GM12878 (cell line): ENCODE measurements at regions of chr2 and their contacts with region 1.

Region 1: GRCh38 chr2:105802587-105802986 is 57.9 kb downstream of the NCK2 start:
- DNase-seq: peak; percentile 74
- ATAC-seq: peak; percentile 74
- H3K4me3 ChIP-seq: no peak overlapping the region
- H3K27ac ChIP-seq: peak overlapping the region; percentile 72
- H3K4me1 ChIP-seq: peaks cover 69% of the 10 kb centered on the region
- H3K27me3 ChIP-seq: no peaks in the 10 kb centered on the region
- CTCF ChIP-seq: no peak
- EP300 ChIP-seq: no peak
- POLR2A ChIP-seq: no peak
- RAD21 ChIP-seq: no peak

Region 2: DNA sequence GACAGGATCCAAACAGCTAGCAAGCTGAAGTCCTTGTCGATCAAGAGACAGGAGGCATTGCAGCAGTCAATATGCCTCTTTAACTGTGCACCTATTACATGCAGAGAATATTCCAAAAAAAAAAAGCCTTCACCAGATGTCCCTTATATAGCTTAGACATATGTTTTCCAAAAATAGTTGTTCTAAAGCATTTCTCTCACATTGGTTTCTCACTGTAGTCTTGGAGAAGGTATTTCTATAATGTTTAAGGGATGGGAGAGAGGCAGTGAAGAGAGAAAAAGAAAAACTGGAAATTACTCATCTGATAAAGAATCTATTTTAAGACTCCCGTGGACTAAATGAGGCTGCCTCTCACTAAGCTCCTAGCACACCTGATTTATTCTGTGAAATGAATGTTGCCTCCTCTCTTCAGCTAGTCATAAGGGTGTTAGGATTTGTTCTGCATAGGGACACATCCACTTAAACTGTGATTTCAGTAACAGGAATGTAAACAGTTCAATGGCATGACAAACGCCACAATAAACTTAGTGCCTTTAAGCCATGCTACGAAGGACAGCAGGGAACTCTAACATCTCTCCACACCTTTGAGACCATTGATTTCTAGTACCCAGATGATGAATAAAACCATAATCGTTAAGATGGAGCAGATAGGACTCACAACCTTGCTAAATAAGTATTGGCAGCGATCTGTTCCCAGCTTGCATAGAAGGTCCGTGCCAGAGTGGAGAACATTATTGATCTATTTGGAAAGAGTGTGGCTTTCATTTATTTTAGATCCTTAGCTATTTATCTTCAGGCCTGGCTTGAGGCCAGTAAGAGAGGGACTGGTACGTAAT is 156.4 kb before region 1 on chr2:
- CTCF ChIA-PET with region 1: no interaction called
- POLR2A ChIA-PET with region 1: no interaction called
- RAD21 ChIA-PET with region 1: no interaction called
- SMC1A ChIA-PET with region 1: no interaction called
- in situ Hi-C with region 1: no loop called
- intact Hi-C with region 1: no loop called
- DNase-seq: no peak
- ATAC-seq: no peak
- H3K4me3 ChIP-seq: no peak overlapping the region
- H3K27ac ChIP-seq: no peak overlapping the region
- H3K4me1 ChIP-seq: no peaks in the 10 kb centered on the region
- H3K27me3 ChIP-seq: no peaks in the 10 kb centered on the region
- CTCF ChIP-seq: no peak
- EP300 ChIP-seq: no peak
- POLR2A ChIP-seq: no peak
- RAD21 ChIP-seq: no peak

Region 3: GRCh38 chr2:105749583-105750400 is 52.8 kb before region 1 on chr2:
- CTCF ChIA-PET with region 1: interaction called, 29 read pairs
- POLR2A ChIA-PET with region 1: interaction called, 9 read pairs
- RAD21 ChIA-PET with region 1: interaction called, 40 read pairs
- SMC1A ChIA-PET with region 1: interaction called, 70 read pairs
- in situ Hi-C with region 1: no loop called
- intact Hi-C with region 1: loop called (anchors 2 kb)
- DNase-seq: no peak
- ATAC-seq: no peak
- H3K4me3 ChIP-seq: 0 out of 2 replicates have a peak overlapping the region, but pooled peaks have one; percentile 27
- H3K27ac ChIP-seq: peak overlapping the region; percentile 28
- H3K4me1 ChIP-seq: peaks cover 35% of the 10 kb centered on the region
- H3K27me3 ChIP-seq: no peaks in the 10 kb centered on the region
- CTCF ChIP-seq: no peak
- EP300 ChIP-seq: no peak
- POLR2A ChIP-seq: no peak
- RAD21 ChIP-seq: no peak

Region 4: GRCh38 chr2:105789745-105790460 is 12.7 kb before region 1 on chr2:
- CTCF ChIA-PET with region 1: interaction called, 24 read pairs
- POLR2A ChIA-PET with region 1: interaction called, 4 read pairs
- RAD21 ChIA-PET with region 1: interaction called, 9 read pairs
- SMC1A ChIA-PET with region 1: interaction called, 14 read pairs
- in situ Hi-C with region 1: no loop called
- intact Hi-C with region 1: no loop called
- DNase-seq: peak; percentile 74
- ATAC-seq: peak; percentile 93
- H3K4me3 ChIP-seq: peak overlapping the region; percentile 29; the same call in 1 of the 2 replicates
- H3K27ac ChIP-seq: peak overlapping the region; percentile 76
- H3K4me1 ChIP-seq: peaks cover 37% of the 10 kb centered on the region
- H3K27me3 ChIP-seq: no peaks in the 10 kb centered on the region
- CTCF ChIP-seq: peak; percentile 32 to 44 (median 37); a peak in 4 of 6 replicates
- EP300 ChIP-seq: no peak
- POLR2A ChIP-seq: no peak
- RAD21 ChIP-seq: peak; percentile 56

Region 5: DNA sequence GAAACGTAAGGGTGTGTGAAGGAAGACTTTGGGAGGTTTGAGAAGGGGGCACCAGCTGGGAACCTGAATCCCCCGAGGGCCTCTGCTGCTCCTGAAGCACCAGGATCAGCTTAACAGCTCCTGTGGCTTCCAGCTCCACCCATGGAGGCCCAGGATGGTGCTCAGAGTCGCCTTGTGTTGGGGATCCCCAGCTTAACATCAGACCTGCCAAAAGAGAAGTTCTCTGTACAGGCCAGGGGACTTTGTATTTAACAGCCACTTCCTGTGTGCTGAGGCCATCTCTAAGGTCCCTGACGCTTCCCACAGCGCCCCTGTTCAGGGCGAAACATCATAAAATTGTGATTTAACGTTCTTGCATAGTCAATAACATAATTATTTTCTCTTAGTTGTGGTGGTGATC is 19.6 kb after region 1 on chr2:
- CTCF ChIA-PET with region 1: interaction called, 16 read pairs
- POLR2A ChIA-PET with region 1: interaction called, 11 read pairs
- RAD21 ChIA-PET with region 1: interaction called, 26 read pairs
- SMC1A ChIA-PET with region 1: interaction called, 20 read pairs
- in situ Hi-C with region 1: no loop called
- intact Hi-C with region 1: no loop called
- DNase-seq: no peak
- ATAC-seq: peak; percentile 99
- H3K4me3 ChIP-seq: no peak overlapping the region; the same call in 1 of the 2 replicates
- H3K27ac ChIP-seq: peak overlapping the region; percentile 73
- H3K4me1 ChIP-seq: peaks cover 13% of the 10 kb centered on the region; the same call in 1 of the 2 replicates
- H3K27me3 ChIP-seq: no peaks in the 10 kb centered on the region
- CTCF ChIP-seq: no peak
- EP300 ChIP-seq: no peak
- POLR2A ChIP-seq: no peak
- RAD21 ChIP-seq: peak; percentile 14; the same call in 1 of the 2 replicates

Region 6: DNA sequence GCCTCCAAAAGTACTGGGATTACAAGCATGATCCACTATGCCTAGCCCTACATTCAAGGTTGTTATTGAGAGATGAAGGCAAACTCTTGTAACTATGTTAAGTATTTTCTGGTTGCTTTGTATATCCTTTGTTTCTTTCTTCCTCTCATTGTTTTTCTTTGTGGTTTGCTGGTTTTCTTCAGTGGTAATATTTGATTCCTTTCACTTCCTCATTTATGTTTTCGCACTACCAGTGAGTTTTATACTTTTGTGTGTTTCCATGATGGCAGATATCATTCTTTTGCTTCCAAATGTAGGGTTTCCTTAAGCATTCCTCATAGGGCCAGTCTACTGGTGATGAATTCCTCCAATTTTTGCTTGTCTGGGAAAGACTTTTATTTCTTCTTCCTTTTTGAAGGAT is 32.3 kb after region 1 on chr2:
- CTCF ChIA-PET with region 1: no interaction called
- POLR2A ChIA-PET with region 1: no interaction called
- RAD21 ChIA-PET with region 1: no interaction called
- SMC1A ChIA-PET with region 1: interaction called, 3 read pairs
- in situ Hi-C with region 1: no loop called
- intact Hi-C with region 1: loop called (anchors 2 kb)
- DNase-seq: peak; percentile 61
- ATAC-seq: peak; percentile 92
- H3K4me3 ChIP-seq: no peak overlapping the region
- H3K27ac ChIP-seq: no peak overlapping the region
- H3K4me1 ChIP-seq: peaks cover 8% of the 10 kb centered on the region; the same call in 1 of the 2 replicates
- H3K27me3 ChIP-seq: no peaks in the 10 kb centered on the region
- CTCF ChIP-seq: no peak
- EP300 ChIP-seq: peak; percentile 86 to 91
- POLR2A ChIP-seq: no peak
- RAD21 ChIP-seq: no peak

Region 7: DNA sequence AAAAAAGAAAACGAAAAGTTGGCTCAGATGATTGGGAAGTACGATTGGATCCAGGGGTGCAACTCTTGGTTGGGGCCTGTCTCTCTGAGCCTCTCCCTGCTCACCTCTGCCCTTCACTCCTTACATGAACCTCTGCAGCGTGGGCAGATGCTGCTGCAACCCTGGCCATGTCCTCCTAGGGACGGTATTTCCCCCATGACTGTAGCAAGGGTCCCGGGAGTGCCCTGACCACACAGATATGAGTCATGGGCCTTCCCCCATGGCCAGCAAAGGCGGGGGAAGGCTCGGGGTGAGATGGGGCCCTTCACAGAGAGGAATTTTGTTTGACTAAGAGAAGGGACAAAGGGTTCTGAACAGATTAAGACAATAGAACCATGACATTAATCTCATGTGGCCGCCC is 71.1 kb after region 1 on chr2:
- CTCF ChIA-PET with region 1: interaction called, 3 read pairs
- POLR2A ChIA-PET with region 1: interaction called, 5 read pairs
- RAD21 ChIA-PET with region 1: interaction called, 11 read pairs
- SMC1A ChIA-PET with region 1: interaction called, 15 read pairs
- in situ Hi-C with region 1: no loop called
- intact Hi-C with region 1: loop called (anchors 5 kb)
- DNase-seq: peak; percentile 71
- ATAC-seq: peak; percentile 97
- H3K4me3 ChIP-seq: no peak overlapping the region
- H3K27ac ChIP-seq: peak overlapping the region; percentile 63
- H3K4me1 ChIP-seq: peaks cover 27% of the 10 kb centered on the region
- H3K27me3 ChIP-seq: no peaks in the 10 kb centered on the region
- CTCF ChIP-seq: peak in 1 of 3 experiments; percentile 5; a peak in 1 of 6 replicates
- EP300 ChIP-seq: peak; percentile 70 to 92; a peak in 3 of 4 replicates
- POLR2A ChIP-seq: peak; percentile 52; the same call in 1 of the 2 replicates
- RAD21 ChIP-seq: peak; percentile 38; the same call in 1 of the 2 replicates

Region 8: DNA sequence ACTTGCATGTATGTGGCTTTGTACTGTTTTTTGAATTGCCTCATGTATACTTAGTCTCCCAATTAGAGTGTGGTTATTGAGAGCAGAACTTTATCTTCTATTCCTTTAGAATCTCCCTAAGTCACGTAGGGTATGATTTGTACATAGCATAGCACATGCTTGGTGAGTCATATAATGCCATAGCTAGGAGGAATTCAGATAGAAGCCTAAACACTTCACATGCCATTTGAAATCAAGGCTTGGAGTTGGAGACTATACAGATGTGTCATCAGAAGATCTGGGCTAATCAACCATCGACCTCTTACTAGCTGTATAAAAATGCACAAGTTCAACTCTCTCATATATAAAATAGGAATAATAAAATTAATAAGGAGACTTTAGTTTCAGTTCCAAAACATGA is 1306.0 kb after region 1 on chr2:
- CTCF ChIA-PET with region 1: no interaction called
- POLR2A ChIA-PET with region 1: no interaction called
- RAD21 ChIA-PET with region 1: no interaction called
- SMC1A ChIA-PET with region 1: no interaction called
- in situ Hi-C with region 1: no loop called
- intact Hi-C with region 1: no loop called
- DNase-seq: no peak
- ATAC-seq: no peak
- H3K4me3 ChIP-seq: no peak overlapping the region
- H3K27ac ChIP-seq: no peak overlapping the region
- H3K4me1 ChIP-seq: no peaks in the 10 kb centered on the region
- H3K27me3 ChIP-seq: no peaks in the 10 kb centered on the region
- CTCF ChIP-seq: no peak
- EP300 ChIP-seq: no peak
- POLR2A ChIP-seq: no peak
- RAD21 ChIP-seq: no peak